MCF 10A (cell line): ENCODE measurements at regions of chr17 and their contacts with region 1.

Region 1: DNA sequence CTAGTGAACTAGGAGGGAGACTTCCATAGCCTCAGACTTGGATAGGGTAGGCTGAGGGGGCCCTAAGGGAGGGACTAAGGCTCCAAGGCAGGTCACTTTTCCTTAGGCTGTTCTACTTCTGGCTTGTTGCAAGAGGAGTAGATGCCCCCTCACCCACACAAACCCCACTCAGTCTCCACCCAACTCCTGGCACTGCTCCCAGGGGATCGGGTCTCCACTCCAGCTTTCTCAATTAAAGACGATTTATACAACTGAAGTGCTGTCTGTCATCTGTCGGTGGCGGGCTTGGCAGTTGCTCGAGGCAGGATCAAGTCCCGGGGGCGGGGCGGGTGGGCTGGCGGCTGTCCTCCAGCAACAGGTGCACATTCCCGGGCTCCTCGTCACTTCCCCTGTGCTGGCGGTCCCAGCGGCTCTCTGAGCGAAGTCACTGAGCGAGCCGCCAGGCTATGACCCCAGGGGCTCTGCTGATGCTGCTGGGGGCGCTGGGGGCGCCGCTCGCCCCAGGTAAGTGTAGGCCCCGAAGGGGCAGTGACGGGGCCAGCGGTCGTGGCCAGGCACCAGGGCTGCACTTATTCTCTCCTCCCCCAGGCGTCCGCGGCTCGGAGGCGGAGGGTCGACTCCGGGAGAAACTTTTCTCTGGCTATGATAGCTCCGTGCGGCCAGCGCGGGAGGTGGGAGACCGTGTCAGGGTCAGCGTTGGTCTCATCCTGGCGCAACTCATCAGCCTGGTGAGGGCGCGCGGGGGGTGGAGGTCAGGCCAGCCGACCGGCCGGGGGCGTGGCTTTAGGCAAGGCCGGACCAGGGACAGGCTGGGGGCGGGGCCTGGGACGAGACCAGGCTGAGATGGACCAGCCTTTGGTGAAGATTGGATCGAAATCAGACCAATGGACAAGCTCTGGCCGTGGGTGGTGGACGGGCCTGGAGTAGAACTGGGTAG is at the start of gene CHRNB1:
- DNase-seq: no peak
- H3K4me3 Mint-ChIP-seq: peak within 1 kb of the TSS; percentile 31
- H3K27ac Mint-ChIP-seq: peak within 1 kb of the TSS; percentile 90
- H3K4me1 Mint-ChIP-seq: peaks cover 11% of the 10 kb centered on the region
- H3K27me3 Mint-ChIP-seq: no peaks in the 10 kb centered on the region
- CTCF ChIP-seq: no peak
- total RNA-seq, gene CHRNB1: 3.3 and 7.8 TPM in 2 replicates

Region 2: GRCh38 chr17:7454980-7455379 is 10.0 kb after region 1 on chr17:
- CTCF ChIA-PET with region 1: interaction called, 7 read pairs
- POLR2A ChIA-PET with region 1: interaction called, 16 read pairs
- intact Hi-C with region 1: no loop called
- DNase-seq: no peak
- H3K4me3 Mint-ChIP-seq: peak overlapping the region; percentile 74
- H3K27ac Mint-ChIP-seq: peak overlapping the region; percentile 14
- H3K4me1 Mint-ChIP-seq: peaks cover 13% of the 10 kb centered on the region
- H3K27me3 Mint-ChIP-seq: no peaks in the 10 kb centered on the region
- CTCF ChIP-seq: no peak

Region 3: DNA sequence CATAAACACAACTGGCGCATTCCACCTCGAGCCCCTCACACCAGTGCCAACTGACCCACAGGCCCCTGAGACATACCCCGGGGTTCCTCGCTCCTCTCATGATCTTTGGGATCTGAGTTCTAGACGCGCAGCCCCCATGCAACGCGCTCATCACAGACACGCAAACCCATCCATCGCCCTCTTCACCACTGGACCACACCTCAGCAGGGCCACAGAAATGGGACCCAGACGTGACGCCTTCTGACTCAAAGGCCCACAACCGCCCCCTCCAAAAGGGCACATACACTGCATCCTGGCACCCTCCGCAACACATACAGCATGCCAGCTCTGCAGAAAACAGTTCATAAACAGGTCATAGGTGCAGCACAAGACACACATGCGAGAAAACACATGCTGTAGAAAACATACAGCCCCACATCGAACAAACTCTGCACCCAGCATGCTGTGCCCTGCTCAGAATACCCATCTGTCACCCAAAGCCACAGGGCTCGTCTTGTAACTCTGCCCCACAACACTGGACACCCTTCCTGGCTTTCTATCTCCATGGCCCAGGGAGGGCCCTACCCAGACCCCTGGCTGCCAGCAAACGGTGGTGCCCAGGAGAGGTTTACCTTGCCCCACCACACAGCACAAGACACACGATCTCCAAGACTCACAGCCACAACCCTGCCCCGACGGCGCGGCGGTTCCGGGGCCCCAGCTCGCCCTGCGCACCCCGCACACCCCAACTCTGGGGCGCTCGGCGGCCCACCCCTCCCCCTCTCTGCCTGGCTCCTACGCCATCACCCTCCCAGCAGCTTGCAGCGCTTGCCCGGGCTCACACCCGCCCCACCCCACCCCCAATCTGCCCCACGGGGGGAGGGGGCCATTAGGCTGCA is 33.6 kb after region 1 on chr17:
- CTCF ChIA-PET with region 1: interaction called, 8 read pairs
- POLR2A ChIA-PET with region 1: interaction called, 115 read pairs
- intact Hi-C with region 1: no loop called
- DNase-seq: no peak
- H3K4me3 Mint-ChIP-seq: peak overlapping the region; percentile 84
- H3K27ac Mint-ChIP-seq: peak overlapping the region; percentile 20
- H3K4me1 Mint-ChIP-seq: peaks cover 43% of the 10 kb centered on the region
- H3K27me3 Mint-ChIP-seq: no peaks in the 10 kb centered on the region
- CTCF ChIP-seq: no peak

Region 4: DNA sequence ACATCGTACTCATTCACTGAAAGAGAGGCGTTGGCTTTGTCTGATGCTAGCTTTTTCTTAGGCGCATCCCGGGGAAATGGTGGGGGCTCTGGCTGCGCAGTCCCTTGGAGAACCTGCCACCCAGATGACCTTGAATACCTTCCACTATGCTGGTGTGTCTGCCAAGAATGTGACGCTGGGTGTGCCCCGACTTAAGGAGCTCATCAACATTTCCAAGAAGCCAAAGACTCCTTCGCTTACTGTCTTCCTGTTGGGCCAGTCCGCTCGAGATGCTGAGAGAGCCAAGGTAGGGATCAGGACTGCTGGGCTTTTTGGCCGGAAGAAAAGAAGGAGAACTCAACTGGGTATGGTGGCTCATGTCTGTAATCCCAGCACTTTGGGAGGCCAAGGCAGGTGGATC is 63.2 kb after region 1 on chr17:
- CTCF ChIA-PET with region 1: no interaction called
- POLR2A ChIA-PET with region 1: no interaction called
- intact Hi-C with region 1: no loop called
- DNase-seq: no peak
- H3K4me3 Mint-ChIP-seq: no peak overlapping the region
- H3K27ac Mint-ChIP-seq: no peak overlapping the region
- H3K4me1 Mint-ChIP-seq: no peaks in the 10 kb centered on the region
- H3K27me3 Mint-ChIP-seq: no peaks in the 10 kb centered on the region
- CTCF ChIP-seq: no peak

Region 5: GRCh38 chr17:7700510-7700909 is 255.6 kb after region 1 on chr17:
- CTCF ChIA-PET with region 1: no interaction called
- POLR2A ChIA-PET with region 1: no interaction called
- intact Hi-C with region 1: no loop called
- DNase-seq: no peak
- H3K4me3 Mint-ChIP-seq: no peak overlapping the region
- H3K27ac Mint-ChIP-seq: no peak overlapping the region
- H3K4me1 Mint-ChIP-seq: peaks cover under 1% of the 10 kb centered on the region
- H3K27me3 Mint-ChIP-seq: peaks cover 5% of the 10 kb centered on the region
- CTCF ChIP-seq: no peak